Endothelial cell of umbilical vein (primary cell): ENCODE measurements at regions of chr17 and their contacts with region 1.

Region 1: DNA sequence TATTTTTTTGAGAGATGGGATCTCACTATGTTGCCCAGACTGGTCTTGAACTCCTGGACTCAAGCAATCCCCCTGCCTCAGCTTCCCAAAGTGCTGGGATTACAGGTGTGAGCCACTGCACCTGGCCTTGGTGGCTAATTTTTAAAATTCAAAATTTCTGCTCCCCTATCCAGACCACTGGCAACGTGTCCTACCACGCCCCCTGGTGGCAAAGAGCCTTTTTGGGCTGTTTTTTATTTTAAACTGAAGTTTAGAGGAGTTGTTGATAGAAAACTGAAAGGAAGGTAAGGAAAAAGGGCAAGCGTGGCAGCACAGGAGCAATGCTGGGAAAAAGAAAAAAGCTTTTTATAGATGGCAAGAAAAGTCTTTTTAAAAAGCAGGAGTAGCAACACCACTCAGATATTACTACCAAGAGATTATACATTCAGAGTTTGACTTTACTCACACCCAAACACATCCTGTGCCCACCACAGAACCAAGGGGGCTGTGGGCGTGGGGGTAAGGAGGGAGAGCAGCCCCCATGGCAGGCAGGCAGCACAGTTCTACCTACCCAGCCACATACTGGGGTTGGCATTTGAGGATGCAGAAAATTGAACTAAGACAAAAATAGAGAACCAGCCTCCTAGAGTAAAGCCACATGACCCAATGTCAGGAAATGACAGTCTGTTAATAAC is 4.2 kb upstream of the MXRA7 start:
- DNase-seq: peak; percentile 57
- H3K4me3 ChIP-seq: no peak overlapping the region
- H3K27ac ChIP-seq: no peak overlapping the region
- H3K4me1 ChIP-seq: peaks cover 16% of the 10 kb centered on the region
- H3K27me3 ChIP-seq: no peaks in the 10 kb centered on the region
- CTCF ChIP-seq: peak; percentile 70 to 72
- POLR2A ChIP-seq: no peak

Region 2: GRCh38 chr17:76557368-76558197 is 157.4 kb before region 1 on chr17:
- CTCF ChIA-PET with region 1: interaction called, 3 read pairs
- POLR2A ChIA-PET with region 1: no interaction called
- dilution Hi-C with region 1: no loop called
- intact Hi-C with region 1: loop called (anchors 5 kb)
- DNase-seq: peak; percentile 98
- H3K4me3 ChIP-seq: peak overlapping the region; percentile 66 to 94 (median 78)
- H3K27ac ChIP-seq: peak overlapping the region; percentile 68
- H3K4me1 ChIP-seq: peaks cover 40% of the 10 kb centered on the region
- H3K27me3 ChIP-seq: no peaks in the 10 kb centered on the region
- CTCF ChIP-seq: peak; percentile 80 to 88
- POLR2A ChIP-seq: peak; percentile 97

Region 3: DNA sequence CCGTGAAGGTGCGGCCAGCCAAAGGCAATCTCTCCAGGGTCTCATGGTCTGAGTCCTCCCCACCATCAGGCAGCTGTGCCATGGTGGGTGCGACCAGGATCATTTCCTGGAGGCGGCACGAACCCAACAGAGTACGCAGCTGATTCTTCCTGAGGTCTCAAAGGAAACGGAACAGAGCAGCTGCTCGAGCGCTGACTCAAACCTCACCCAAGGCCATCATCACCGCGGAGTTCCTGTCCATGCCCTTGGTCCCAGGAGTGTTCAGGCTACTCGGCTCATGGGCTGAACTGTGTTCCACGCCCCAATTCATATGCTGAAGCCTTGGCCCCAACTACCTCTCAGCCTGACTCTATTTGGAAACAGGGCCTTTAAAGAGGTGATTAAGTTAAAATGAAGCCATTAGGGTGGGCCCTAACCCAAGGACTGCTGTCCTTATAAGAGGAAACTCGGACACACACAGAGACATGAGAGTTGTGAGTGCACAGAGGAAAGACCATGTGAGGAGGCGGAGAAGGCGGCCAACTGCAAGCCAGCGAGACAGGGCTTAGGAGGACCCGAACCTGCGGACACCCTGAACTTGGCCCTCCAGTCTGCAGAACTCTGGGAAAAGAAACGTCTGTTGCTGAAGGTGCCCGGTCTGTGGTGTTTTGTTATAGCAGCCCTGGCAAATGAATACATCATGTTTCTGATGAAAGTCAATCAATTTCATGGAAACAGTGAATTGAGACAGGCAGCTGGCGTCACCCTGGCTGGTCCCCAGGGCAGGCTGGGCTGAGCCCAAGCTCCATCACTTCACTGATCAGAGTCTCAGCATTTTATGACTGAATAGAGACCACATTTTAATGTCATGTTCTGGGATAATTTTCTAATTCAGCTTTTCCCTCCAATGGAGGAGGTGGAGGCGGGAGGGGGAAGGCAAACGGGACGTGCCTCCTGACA is 17.9 kb before region 1 on chr17:
- CTCF ChIA-PET with region 1: interaction called, 18 read pairs
- POLR2A ChIA-PET with region 1: no interaction called
- dilution Hi-C with region 1: no loop called
- intact Hi-C with region 1: no loop called
- DNase-seq: peak; percentile 76
- H3K4me3 ChIP-seq: no peak overlapping the region
- H3K27ac ChIP-seq: peak overlapping the region; percentile 84
- H3K4me1 ChIP-seq: peaks cover 41% of the 10 kb centered on the region
- H3K27me3 ChIP-seq: no peaks in the 10 kb centered on the region
- CTCF ChIP-seq: no peak
- POLR2A ChIP-seq: no peak

Region 4: DNA sequence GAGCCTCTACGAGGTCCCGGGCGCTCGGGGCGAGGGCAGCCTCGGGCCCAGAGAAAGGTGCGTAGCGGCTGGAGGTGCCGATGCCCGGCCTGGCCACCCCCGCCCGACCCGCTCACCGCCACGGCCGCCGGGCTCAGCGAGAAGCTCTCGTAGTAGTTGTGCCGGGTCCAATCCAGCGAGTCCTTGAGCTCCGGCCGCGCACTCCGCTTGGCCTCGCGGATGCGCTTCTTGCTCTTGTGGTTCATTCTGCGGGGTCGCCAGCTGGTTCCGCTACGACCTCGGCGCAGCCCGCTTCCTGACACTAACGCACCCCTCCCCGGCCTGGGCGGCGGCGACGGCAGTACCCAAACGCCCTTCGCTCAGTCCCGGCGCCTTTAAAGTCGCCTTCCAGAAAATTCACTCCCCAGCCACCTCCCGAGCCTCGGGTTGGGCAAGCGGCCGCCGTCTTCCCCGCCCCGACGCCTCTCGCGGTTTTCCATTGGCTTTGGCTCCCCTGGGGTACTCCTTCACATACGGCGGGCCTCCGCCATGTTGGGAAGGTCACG is 11.3 kb after region 1 on chr17 and contains the start of gene JMJD6:
- CTCF ChIA-PET with region 1: interaction called, 5 read pairs
- POLR2A ChIA-PET with region 1: no interaction called
- dilution Hi-C with region 1: no loop called
- intact Hi-C with region 1: loop called (anchors 1 kb)
- DNase-seq: peak; percentile 96
- H3K4me3 ChIP-seq: peak within 1 kb of the TSS; percentile 66 to 99 (median 90)
- H3K27ac ChIP-seq: peak within 1 kb of the TSS; percentile 85
- H3K4me1 ChIP-seq: peaks cover 18% of the 10 kb centered on the region
- H3K27me3 ChIP-seq: no peaks in the 10 kb centered on the region
- CTCF ChIP-seq: no peak
- POLR2A ChIP-seq: peak; percentile 88
- total RNA-seq, gene JMJD6: 36.6 and 41.6 TPM in 2 replicates

Region 5: GRCh38 chr17:76791053-76791980 is 76.4 kb after region 1 on chr17:
- CTCF ChIA-PET with region 1: no interaction called
- POLR2A ChIA-PET with region 1: no interaction called
- dilution Hi-C with region 1: no loop called
- intact Hi-C with region 1: no loop called
- DNase-seq: peak; percentile 53
- H3K4me3 ChIP-seq: no peak overlapping the region
- H3K27ac ChIP-seq: no peak overlapping the region
- H3K4me1 ChIP-seq: peaks cover 7% of the 10 kb centered on the region
- H3K27me3 ChIP-seq: no peaks in the 10 kb centered on the region
- CTCF ChIP-seq: no peak
- POLR2A ChIP-seq: no peak